Activated naive CD4-positive, alpha-beta T cell treated with anti-CD3 and anti-CD28 coated beads for 36 hours (primary cell): ENCODE measurements at regions of chr7 and their contacts with region 1.

Region 1: GRCh38 chr7:106461993-106462859 is 177.4 kb upstream of the NAMPT start:
- DNase-seq: peak; percentile 29
- H3K4me3 Mint-ChIP-seq: no peak overlapping the region
- H3K27ac Mint-ChIP-seq: peak overlapping the region; percentile 50
- H3K4me1 Mint-ChIP-seq: peaks cover 29% of the 10 kb centered on the region
- H3K27me3 Mint-ChIP-seq: no peaks in the 10 kb centered on the region

Region 2: DNA sequence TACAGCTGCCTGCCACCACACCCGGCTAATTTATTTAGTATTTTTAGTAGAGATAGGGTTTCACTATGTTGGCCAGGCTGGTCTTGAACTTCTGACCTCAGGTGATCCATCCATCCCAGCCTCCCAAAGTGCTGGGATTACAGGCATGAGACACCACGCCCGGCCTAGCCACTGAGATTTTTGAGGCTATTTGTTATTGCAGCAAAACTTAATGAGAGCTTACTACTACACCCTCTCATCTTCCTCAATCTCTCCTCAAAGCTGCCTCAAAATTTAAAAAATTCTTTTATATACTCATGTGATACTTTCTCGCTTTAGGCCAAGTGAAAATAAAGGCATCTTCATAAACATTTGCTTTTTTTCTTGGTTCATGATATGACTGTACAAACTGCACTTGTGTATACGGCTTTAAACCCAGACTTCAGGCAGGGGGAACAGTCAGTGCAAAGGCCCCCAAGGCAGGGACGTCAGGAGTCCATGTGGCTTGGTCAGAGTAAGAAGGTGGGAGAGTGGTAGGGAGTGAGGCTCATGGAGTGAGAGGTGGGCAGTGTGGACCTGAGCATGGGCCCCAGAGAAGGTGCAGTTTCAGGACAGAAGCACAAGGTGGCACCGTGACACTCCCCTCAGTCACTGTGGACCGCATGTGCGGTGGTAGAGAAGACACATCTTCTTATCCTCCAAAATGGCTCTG is 405.6 kb before region 1 on chr7:
- CTCF ChIA-PET with region 1: no interaction called
- intact Hi-C with region 1: loop called (anchors 10 kb)
- DNase-seq: peak; percentile 84
- H3K4me3 Mint-ChIP-seq: no peak overlapping the region
- H3K27ac Mint-ChIP-seq: no peak overlapping the region
- H3K4me1 Mint-ChIP-seq: peaks cover 16% of the 10 kb centered on the region
- H3K27me3 Mint-ChIP-seq: no peaks in the 10 kb centered on the region

Region 3: GRCh38 chr7:106260136-106260561 is 202.1 kb before region 1 on chr7:
- CTCF ChIA-PET with region 1: interaction called, 6 read pairs
- intact Hi-C with region 1: loop called (anchors 5 kb)
- DNase-seq: no peak
- H3K4me3 Mint-ChIP-seq: no peak overlapping the region
- H3K27ac Mint-ChIP-seq: peak overlapping the region; percentile 76
- H3K4me1 Mint-ChIP-seq: peaks cover 79% of the 10 kb centered on the region
- H3K27me3 Mint-ChIP-seq: no peaks in the 10 kb centered on the region

Region 4: GRCh38 chr7:106367018-106367420 is 95.2 kb before region 1 on chr7:
- CTCF ChIA-PET with region 1: interaction called, 3 read pairs
- intact Hi-C with region 1: loop called (anchors 1 kb)
- DNase-seq: no peak
- H3K4me3 Mint-ChIP-seq: no peak overlapping the region
- H3K27ac Mint-ChIP-seq: peak overlapping the region; percentile 70
- H3K4me1 Mint-ChIP-seq: peaks cover 44% of the 10 kb centered on the region
- H3K27me3 Mint-ChIP-seq: peaks cover 23% of the 10 kb centered on the region

Region 5: DNA sequence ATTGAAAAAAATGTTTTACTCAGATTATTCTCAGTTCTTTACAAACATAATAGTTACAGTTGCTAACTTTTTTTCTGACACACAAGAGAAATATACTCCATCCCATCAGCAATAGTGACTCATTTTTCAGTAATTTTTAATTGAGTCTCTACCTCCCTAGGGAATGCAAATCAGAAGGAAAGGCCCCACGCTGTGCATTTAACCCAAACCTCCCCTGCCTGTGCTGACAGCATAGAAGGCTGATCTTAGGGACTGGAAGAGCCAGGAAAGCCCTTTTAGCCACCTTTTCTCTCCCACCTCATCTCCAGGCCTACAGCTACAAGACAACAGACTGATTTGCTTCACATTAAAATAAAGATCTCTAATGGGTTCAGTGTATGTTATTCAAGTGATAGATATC is 378.1 kb after region 1 on chr7:
- CTCF ChIA-PET with region 1: no interaction called
- intact Hi-C with region 1: no loop called
- DNase-seq: no peak
- H3K4me3 Mint-ChIP-seq: no peak overlapping the region
- H3K27ac Mint-ChIP-seq: no peak overlapping the region
- H3K4me1 Mint-ChIP-seq: peaks cover 4% of the 10 kb centered on the region
- H3K27me3 Mint-ChIP-seq: no peaks in the 10 kb centered on the region

Region 6: GRCh38 chr7:107065929-107066247 is 603.7 kb after region 1 on chr7:
- CTCF ChIA-PET with region 1: no interaction called
- intact Hi-C with region 1: no loop called
- DNase-seq: no peak
- H3K4me3 Mint-ChIP-seq: no peak overlapping the region
- H3K27ac Mint-ChIP-seq: no peak overlapping the region
- H3K4me1 Mint-ChIP-seq: no peaks in the 10 kb centered on the region
- H3K27me3 Mint-ChIP-seq: peaks cover 5% of the 10 kb centered on the region